ENCODE measurements at regions of chr2 and their contacts with region 1.

Region 1: GRCh38 chr2:110903548-110903947 is 171.2 kb downstream of the ACOXL start:
- DNase-seq: peak; percentile 83
- H3K4me3 ChIP-seq: no peak overlapping the region
- H3K27ac ChIP-seq: no peak overlapping the region
- H3K4me1 ChIP-seq: peaks cover 0 to 19% (median 7%) of the 10 kb centered on the region in 4 donors
- H3K27me3 ChIP-seq: no peaks in the 10 kb centered on the region
- CTCF ChIP-seq: no peak
- EP300 ChIP-seq: no peak
- POLR2A ChIP-seq: no peak

Region 2: GRCh38 chr2:110788976-110789375 is 114.6 kb before region 1 on chr2:
- in situ Hi-C with region 1: no loop called
- intact Hi-C with region 1: no loop called
- DNase-seq: no peak
- H3K4me3 ChIP-seq: no peak overlapping the region
- H3K27ac ChIP-seq: no peak overlapping the region
- H3K4me1 ChIP-seq: no peaks in the 10 kb centered on the region
- H3K27me3 ChIP-seq: peaks cover 7% of the 10 kb centered on the region
- CTCF ChIP-seq: no peak
- EP300 ChIP-seq: no peak
- POLR2A ChIP-seq: no peak

Region 3: GRCh38 chr2:110837446-110838405 is 65.8 kb before region 1 on chr2:
- in situ Hi-C with region 1: no loop called
- intact Hi-C with region 1: no loop called
- DNase-seq: no peak
- H3K4me3 ChIP-seq: no peak overlapping the region
- H3K27ac ChIP-seq: no peak overlapping the region
- H3K4me1 ChIP-seq: peaks cover 0 to 5% (median 0%) of the 10 kb centered on the region in 4 donors
- H3K27me3 ChIP-seq: no peaks in the 10 kb centered on the region
- CTCF ChIP-seq: no peak
- EP300 ChIP-seq: no peak
- POLR2A ChIP-seq: no peak

Region 4: GRCh38 chr2:111022633-111023032 is 119.1 kb after region 1 on chr2:
- in situ Hi-C with region 1: loop called in 1 of 4 experiments (anchors 25 kb)
- intact Hi-C with region 1: no loop called
- DNase-seq: no peak
- H3K4me3 ChIP-seq: no peak overlapping the region
- H3K27ac ChIP-seq: no peak overlapping the region
- H3K4me1 ChIP-seq: peaks cover 0 to 16% (median 6%) of the 10 kb centered on the region in 4 donors
- H3K27me3 ChIP-seq: no peaks in the 10 kb centered on the region
- CTCF ChIP-seq: no peak
- EP300 ChIP-seq: no peak
- POLR2A ChIP-seq: no peak

Region 5: GRCh38 chr2:111201214-111201613 is 297.7 kb after region 1 on chr2:
- in situ Hi-C with region 1: no loop called
- intact Hi-C with region 1: no loop called
- DNase-seq: no peak
- H3K4me3 ChIP-seq: no peak overlapping the region
- H3K27ac ChIP-seq: no peak overlapping the region
- H3K4me1 ChIP-seq: peaks cover 0 to 3% (median 0%) of the 10 kb centered on the region in 4 donors
- H3K27me3 ChIP-seq: no peaks in the 10 kb centered on the region
- CTCF ChIP-seq: no peak
- EP300 ChIP-seq: no peak
- POLR2A ChIP-seq: no peak